Transverse colon (tissue), 4 donors: ENCODE measurements at regions of chr2 and their contacts with region 1.

Region 1: DNA sequence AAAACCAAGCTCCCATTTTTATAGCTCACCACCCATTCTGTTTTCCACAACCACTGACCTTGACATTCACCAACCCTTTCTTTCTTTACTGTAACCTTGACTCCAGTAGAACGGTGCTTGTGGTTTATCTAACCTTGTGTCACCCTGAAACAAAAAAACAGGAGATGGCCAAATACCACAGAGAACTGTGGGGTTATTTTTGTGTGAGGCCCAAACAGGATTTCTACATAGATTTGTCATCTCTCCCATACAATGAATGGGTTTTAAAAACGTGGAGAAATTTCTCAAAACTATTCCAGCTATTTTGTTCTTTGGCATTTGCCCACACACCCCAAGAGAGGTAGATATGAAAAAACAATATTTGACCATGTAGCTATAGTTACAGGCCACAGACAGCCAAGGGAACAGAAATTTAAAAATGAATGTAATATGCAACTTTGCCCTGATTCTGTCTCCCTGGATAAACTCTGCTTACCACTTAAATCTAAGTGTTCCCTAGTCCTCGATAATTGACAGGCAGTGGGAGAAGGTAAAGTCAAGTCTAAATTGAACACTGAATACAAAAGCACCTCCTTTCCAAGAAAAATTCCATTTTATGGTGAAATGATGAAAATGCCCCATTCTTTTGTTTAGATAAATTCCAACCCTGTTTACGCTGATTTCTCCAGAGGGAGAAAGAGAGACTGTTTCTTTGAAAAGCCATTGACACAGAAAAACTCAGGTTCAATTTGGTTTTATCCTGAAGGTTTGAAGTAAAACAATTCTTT is 231.2 kb upstream of the TANK start:
- DNase-seq: no peak
- H3K4me3 ChIP-seq: no peak overlapping the region
- H3K27ac ChIP-seq: no peak overlapping the region
- H3K4me1 ChIP-seq: no peaks in the 10 kb centered on the region
- H3K27me3 ChIP-seq: no peaks in the 10 kb centered on the region
- CTCF ChIP-seq: no peak
- EP300 ChIP-seq: no peak
- POLR2A ChIP-seq: no peak

Region 2: GRCh38 chr2:160394153-160394552 is 534.9 kb before region 1 on chr2:
- in situ Hi-C with region 1: no loop called
- intact Hi-C with region 1: no loop called
- DNase-seq: no peak
- H3K4me3 ChIP-seq: no peak overlapping the region
- H3K27ac ChIP-seq: peak overlapping the region in 1 of 4 donors; percentile 16
- H3K4me1 ChIP-seq: peaks cover 2 to 63% (median 13%) of the 10 kb centered on the region in 4 donors
- H3K27me3 ChIP-seq: peaks cover 9% of the 10 kb centered on the region
- CTCF ChIP-seq: no peak
- EP300 ChIP-seq: no peak
- POLR2A ChIP-seq: no peak

Region 3: GRCh38 chr2:160910681-160911080 is 18.4 kb before region 1 on chr2:
- in situ Hi-C with region 1: no loop called
- intact Hi-C with region 1: loop called (anchors 1 kb)
- DNase-seq: no peak
- H3K4me3 ChIP-seq: no peak overlapping the region
- H3K27ac ChIP-seq: peak overlapping the region; percentile 49 to 57 (median 52)
- H3K4me1 ChIP-seq: peaks cover 0 to 19% (median 6%) of the 10 kb centered on the region in 4 donors
- H3K27me3 ChIP-seq: no peaks in the 10 kb centered on the region
- CTCF ChIP-seq: no peak
- EP300 ChIP-seq: no peak
- POLR2A ChIP-seq: no peak